Endothelial cell of umbilical vein (primary cell): ENCODE measurements at regions of chr5 and their contacts with region 1.

Region 1: DNA sequence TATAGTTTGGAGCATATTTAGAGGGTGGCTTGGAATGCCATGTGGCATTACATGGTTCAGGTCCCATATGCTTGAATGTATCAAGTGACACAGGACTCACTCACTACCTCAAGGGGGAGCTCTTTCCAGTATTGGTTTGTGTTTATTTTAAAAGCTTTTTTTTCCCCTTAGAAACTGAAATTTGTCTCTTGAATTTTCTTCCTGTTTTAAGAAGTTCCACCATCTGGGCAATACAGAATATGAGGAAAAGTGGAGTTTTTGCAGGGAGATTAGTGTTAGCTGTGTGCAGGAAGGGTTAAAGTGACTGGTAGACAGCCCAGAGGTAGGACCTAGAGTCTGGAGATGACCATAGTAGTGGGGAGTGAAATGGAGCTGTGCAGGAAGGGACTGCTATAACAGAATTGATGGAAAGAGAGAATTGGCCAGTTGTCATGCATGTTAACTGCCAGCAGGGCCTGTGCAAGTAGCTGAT is 36.6 kb downstream of the CTNNA1 start:
- DNase-seq: peak; percentile 50
- H3K4me3 ChIP-seq: no peak overlapping the region
- H3K27ac ChIP-seq: no peak overlapping the region
- H3K4me1 ChIP-seq: no peaks in the 10 kb centered on the region
- H3K27me3 ChIP-seq: no peaks in the 10 kb centered on the region
- CTCF ChIP-seq: peak; percentile 65 to 67
- POLR2A ChIP-seq: no peak

Region 2: GRCh38 chr5:138760448-138761110 is 29.2 kb before region 1 on chr5:
- CTCF ChIA-PET with region 1: interaction called, 27 read pairs
- POLR2A ChIA-PET with region 1: interaction called, 7 read pairs
- dilution Hi-C with region 1: no loop called
- intact Hi-C with region 1: no loop called
- DNase-seq: peak; percentile 35
- H3K4me3 ChIP-seq: peak overlapping the region in 1 of 3 experiments; percentile 4
- H3K27ac ChIP-seq: peak overlapping the region; percentile 81
- H3K4me1 ChIP-seq: peaks cover 17% of the 10 kb centered on the region
- H3K27me3 ChIP-seq: no peaks in the 10 kb centered on the region
- CTCF ChIP-seq: no peak
- POLR2A ChIP-seq: no peak

Region 3: GRCh38 chr5:138778234-138778633 is 11.6 kb before region 1 on chr5:
- CTCF ChIA-PET with region 1: interaction called, 19 read pairs
- POLR2A ChIA-PET with region 1: no interaction called
- dilution Hi-C with region 1: no loop called
- intact Hi-C with region 1: no loop called
- DNase-seq: no peak
- H3K4me3 ChIP-seq: no peak overlapping the region
- H3K27ac ChIP-seq: no peak overlapping the region
- H3K4me1 ChIP-seq: no peaks in the 10 kb centered on the region
- H3K27me3 ChIP-seq: no peaks in the 10 kb centered on the region
- CTCF ChIP-seq: no peak
- POLR2A ChIP-seq: no peak

Region 4: DNA sequence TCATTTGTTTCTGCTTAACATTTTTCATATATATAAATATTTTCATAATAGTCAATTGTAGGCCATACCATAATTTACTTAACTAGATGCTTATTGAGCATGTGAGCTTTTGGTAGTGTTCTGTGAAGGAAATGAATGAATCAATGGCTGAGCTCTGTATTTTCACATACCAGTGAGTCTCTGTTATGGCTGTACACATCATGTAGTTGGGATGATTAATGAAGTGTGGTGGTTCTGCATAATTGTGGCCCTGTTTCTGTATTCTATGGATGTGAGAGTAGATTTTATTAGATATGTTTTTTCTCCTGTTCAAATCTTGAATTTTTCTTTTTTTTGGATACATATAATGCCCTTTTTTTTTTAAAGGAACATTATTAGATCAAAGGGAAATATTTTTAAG is 19.6 kb after region 1 on chr5:
- CTCF ChIA-PET with region 1: interaction called, 18 read pairs
- POLR2A ChIA-PET with region 1: no interaction called
- dilution Hi-C with region 1: no loop called
- intact Hi-C with region 1: no loop called
- DNase-seq: no peak
- H3K4me3 ChIP-seq: no peak overlapping the region
- H3K27ac ChIP-seq: no peak overlapping the region
- H3K4me1 ChIP-seq: no peaks in the 10 kb centered on the region
- H3K27me3 ChIP-seq: no peaks in the 10 kb centered on the region
- CTCF ChIP-seq: no peak
- POLR2A ChIP-seq: no peak

Region 5: DNA sequence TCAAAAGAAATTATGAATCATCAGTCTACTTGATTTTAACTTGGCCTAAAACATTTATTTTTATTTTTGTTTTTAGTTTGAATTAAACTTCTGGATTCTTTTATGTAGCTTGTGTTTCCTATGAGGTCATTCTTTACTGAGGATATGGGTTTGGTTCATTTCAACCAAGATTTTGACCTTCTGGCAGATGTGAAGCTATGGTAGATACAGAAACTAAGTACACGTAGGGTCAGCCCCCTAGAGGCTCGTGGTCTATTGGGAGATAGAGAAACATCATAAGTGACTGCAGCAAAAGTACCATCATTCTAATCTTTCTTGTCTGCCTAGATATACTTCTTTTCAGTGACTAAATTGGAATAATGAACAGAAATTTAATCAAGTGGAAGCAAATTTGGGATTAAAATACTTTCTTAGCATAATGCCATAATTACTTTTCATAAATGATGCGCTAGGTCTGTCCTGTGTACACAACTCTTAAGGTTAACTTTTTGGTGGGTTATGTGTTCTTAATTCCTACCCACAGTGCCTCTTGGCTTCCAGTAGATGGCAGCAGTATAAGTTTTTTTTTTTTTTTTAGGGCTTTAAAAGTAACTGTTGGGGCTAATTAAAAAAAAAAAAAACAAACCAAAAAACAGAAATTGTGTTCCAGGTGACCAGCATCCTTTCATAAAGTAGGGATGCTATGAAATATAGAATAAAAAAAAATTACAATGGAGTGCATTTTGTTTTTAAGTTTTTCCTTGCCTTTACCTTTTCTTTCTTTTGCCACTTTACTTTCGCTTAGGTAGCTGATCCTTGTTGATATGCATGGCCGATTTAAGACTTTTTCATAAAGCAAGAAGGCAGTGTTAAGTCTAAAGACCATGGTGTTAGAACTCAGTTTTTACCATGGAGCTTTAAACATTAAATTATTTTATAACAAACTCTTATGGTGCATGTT is 35.4 kb after region 1 on chr5:
- CTCF ChIA-PET with region 1: interaction called, 41 read pairs
- POLR2A ChIA-PET with region 1: no interaction called
- dilution Hi-C with region 1: no loop called
- intact Hi-C with region 1: no loop called
- DNase-seq: peak; percentile 58
- H3K4me3 ChIP-seq: no peak overlapping the region
- H3K27ac ChIP-seq: peak overlapping the region; percentile 45
- H3K4me1 ChIP-seq: peaks cover 2% of the 10 kb centered on the region
- H3K27me3 ChIP-seq: no peaks in the 10 kb centered on the region
- CTCF ChIP-seq: peak; percentile 29 to 30
- POLR2A ChIP-seq: no peak

Region 6: DNA sequence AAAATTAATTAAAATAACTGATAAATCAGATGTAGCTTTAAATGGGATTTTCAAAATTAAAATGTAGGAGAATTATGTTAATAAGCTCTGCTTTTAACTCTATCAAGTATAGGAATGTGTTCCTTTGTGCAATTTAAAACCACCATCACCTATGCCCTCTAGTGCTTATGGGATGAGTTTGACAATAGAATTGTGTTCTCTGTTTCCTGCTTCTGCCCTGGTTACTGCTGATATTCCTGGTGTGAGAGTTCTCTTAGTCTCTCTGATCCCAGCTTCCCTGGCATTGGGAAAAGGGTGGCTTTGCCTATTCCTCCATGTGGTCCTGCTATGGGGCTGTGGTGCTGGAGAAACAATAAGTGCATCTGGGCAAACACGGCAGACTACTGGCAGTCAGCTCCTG is 77.2 kb after region 1 on chr5:
- CTCF ChIA-PET with region 1: interaction called, 10 read pairs
- POLR2A ChIA-PET with region 1: no interaction called
- dilution Hi-C with region 1: no loop called
- intact Hi-C with region 1: no loop called
- DNase-seq: peak; percentile 39
- H3K4me3 ChIP-seq: no peak overlapping the region
- H3K27ac ChIP-seq: no peak overlapping the region
- H3K4me1 ChIP-seq: peaks cover 9% of the 10 kb centered on the region
- H3K27me3 ChIP-seq: no peaks in the 10 kb centered on the region
- CTCF ChIP-seq: no peak
- POLR2A ChIP-seq: no peak

Region 7: GRCh38 chr5:138975098-138975847 is 185.5 kb after region 1 on chr5:
- CTCF ChIA-PET with region 1: no interaction called
- POLR2A ChIA-PET with region 1: no interaction called
- dilution Hi-C with region 1: no loop called
- intact Hi-C with region 1: no loop called
- DNase-seq: peak; percentile 66
- H3K4me3 ChIP-seq: no peak overlapping the region
- H3K27ac ChIP-seq: peak overlapping the region; percentile 52
- H3K4me1 ChIP-seq: peaks cover 13% of the 10 kb centered on the region
- H3K27me3 ChIP-seq: no peaks in the 10 kb centered on the region
- CTCF ChIP-seq: no peak
- POLR2A ChIP-seq: no peak

Region 8: DNA sequence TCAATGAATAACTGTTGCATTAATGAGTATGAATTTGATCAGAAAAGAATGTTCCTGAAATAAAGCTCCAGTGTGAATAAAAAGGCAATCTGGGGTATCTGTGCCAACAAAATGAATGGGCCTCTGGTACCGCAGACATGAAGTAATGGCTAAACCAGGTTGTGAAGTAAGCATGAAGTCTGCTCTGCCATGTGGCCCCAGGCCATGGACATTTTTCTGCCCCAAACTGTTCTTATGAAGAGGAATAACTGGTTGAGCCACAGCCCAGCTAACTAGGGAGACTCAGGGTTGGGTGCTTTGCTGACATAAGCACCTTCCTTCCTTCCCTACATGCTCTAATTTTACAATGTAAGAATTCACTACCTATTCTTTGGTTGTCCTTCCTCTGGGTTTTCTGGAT is 232.7 kb after region 1 on chr5:
- CTCF ChIA-PET with region 1: no interaction called
- POLR2A ChIA-PET with region 1: no interaction called
- dilution Hi-C with region 1: no loop called
- intact Hi-C with region 1: no loop called
- DNase-seq: no peak
- H3K4me3 ChIP-seq: no peak overlapping the region
- H3K27ac ChIP-seq: no peak overlapping the region
- H3K4me1 ChIP-seq: peaks cover under 1% of the 10 kb centered on the region
- H3K27me3 ChIP-seq: no peaks in the 10 kb centered on the region
- CTCF ChIP-seq: no peak
- POLR2A ChIP-seq: no peak